CD4-positive, alpha-beta memory T cell (primary cell): ENCODE measurements at regions of chr11 and their contacts with region 1.

Region 1: DNA sequence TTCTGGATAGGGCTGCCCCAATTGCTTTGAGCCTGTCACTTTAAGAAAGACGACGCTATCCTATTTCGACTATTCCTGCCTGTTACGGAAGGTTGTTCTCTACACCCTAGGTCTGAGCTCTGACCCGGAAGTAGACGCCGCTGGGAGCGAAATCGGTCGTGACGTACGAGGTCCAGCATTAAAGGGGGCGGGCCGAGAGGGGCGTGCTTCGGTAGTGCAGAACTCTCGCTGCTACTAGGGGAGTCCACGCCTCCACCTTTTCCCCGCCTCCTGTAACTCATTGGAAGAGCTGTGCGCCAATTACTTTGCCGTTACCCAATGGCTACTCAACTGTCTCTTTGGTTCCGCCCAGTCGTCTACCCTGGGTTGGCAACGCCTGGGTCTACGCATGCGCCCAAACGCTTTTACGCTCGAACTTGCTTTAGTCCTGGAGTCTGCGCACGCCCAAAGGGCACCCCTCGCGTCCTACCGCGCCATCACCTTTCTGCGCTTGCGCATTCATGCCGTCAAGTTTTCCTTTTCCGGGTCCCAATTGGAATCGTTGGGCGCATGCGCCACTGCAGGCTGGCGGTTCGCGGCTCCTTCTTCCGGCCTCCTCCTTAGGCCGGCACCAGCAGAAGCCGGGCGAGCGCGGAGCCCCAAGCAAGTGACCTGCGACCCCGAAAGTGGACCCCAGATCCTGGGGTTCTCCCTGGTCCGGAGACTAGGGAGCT is at the start of gene PCNX3:
- DNase-seq: peak; percentile 100
- H3K4me3 ChIP-seq: peak within 1 kb of the TSS; percentile 74 to 96
- H3K4me3 Mint-ChIP-seq: peak within 1 kb of the TSS; percentile 95 to 99 (median 96)
- H3K27ac ChIP-seq: peak within 1 kb of the TSS; percentile 96
- H3K27ac Mint-ChIP-seq: peak within 1 kb of the TSS; percentile 90 to 100 (median 99)
- H3K4me1 ChIP-seq: peaks cover 46% of the 10 kb centered on the region
- H3K4me1 Mint-ChIP-seq: peaks cover 23 to 59% (median 46%) of the 10 kb centered on the region in 4 donors
- H3K27me3 ChIP-seq: no peaks in the 10 kb centered on the region
- H3K27me3 Mint-ChIP-seq: no peaks in the 10 kb centered on the region
- total RNA-seq, gene PCNX3: 63.3 to 66.3 TPM

Region 2: DNA sequence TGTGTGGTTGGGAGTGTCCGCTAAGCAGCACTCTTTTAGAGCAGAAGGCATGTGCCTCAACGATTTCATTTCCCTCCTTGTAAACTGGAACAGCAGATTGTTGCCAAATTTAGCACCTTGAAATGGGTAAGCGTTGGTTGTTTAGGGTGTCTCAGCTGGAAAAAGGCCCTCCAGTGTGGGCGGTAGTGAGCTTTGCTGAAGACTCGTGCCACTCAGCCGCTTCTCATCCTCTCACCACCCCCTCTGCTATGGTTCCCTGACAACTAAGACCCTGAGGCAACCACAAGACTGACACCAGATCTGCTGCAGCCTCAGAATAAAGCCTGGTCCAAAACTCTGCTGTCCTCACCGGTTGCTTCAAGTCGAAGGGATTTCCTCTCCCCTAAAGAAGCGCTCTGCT is 1418.8 kb before region 1 on chr11:
- CTCF ChIA-PET with region 1: no interaction called
- POLR2A ChIA-PET with region 1: no interaction called
- intact Hi-C with region 1: no loop called
- DNase-seq: no peak
- H3K4me3 ChIP-seq: no peak overlapping the region
- H3K4me3 Mint-ChIP-seq: no peak overlapping the region
- H3K27ac ChIP-seq: no peak overlapping the region
- H3K27ac Mint-ChIP-seq: peak overlapping the region in 2 of 7 donors; percentile 68 to 70
- H3K4me1 ChIP-seq: peaks cover 5% of the 10 kb centered on the region
- H3K4me1 Mint-ChIP-seq: peaks cover 6 to 18% (median 10%) of the 10 kb centered on the region in 4 donors
- H3K27me3 ChIP-seq: no peaks in the 10 kb centered on the region
- H3K27me3 Mint-ChIP-seq: no peaks in the 10 kb centered on the region

Region 3: GRCh38 chr11:65454696-65455456 is 160.5 kb before region 1 on chr11:
- CTCF ChIA-PET with region 1: no interaction called
- POLR2A ChIA-PET with region 1: no interaction called
- intact Hi-C with region 1: no loop called
- DNase-seq: peak; percentile 55 to 76 (median 64)
- H3K4me3 ChIP-seq: peak overlapping the region; percentile 78 to 84
- H3K4me3 Mint-ChIP-seq: peak overlapping the region; percentile 85 to 91 (median 88)
- H3K27ac ChIP-seq: peak overlapping the region; percentile 64
- H3K27ac Mint-ChIP-seq: peak overlapping the region; percentile 84 to 97 (median 89)
- H3K4me1 ChIP-seq: peaks cover 12% of the 10 kb centered on the region
- H3K4me1 Mint-ChIP-seq: peaks cover 11 to 34% (median 16%) of the 10 kb centered on the region in 4 donors
- H3K27me3 ChIP-seq: no peaks in the 10 kb centered on the region
- H3K27me3 Mint-ChIP-seq: no peaks in the 10 kb centered on the region

Region 4: DNA sequence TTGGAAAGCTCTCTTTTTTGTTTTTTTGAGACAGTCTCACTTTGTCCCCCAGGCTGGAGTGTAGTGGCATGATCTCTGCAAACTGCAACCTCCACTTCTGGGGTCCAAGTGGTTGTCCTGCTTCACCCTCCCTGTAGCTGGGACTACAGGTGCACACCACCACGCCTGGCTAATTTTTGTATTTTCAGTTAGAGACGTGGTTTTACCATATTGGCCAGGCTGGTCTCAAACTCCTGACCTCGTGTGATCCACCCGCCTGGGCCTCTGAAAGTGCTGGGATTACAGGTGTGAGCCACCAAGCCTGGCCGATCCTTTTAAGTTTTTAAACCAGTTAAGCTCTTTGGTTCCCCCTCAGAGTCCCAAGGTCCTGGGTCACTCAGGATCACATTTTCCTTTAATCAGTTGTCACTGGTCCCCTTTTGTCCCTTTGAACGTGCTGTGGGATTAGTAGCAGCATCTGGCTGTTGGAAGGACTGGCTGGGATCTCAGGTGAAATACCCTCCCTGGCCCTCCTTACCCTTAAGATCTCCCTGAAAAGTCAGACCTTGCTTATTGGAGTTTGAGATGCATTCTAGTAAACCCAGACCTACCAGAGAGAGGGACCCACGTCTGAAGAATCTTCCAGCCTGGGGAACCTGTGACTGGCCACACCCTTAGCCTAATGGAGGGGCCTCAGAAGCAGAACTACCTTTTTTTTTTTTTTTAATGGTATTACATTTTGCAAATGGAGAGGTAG is 108.4 kb before region 1 on chr11:
- CTCF ChIA-PET with region 1: interaction called, 3 read pairs
- POLR2A ChIA-PET with region 1: interaction called, 11 read pairs
- intact Hi-C with region 1: no loop called
- DNase-seq: peak in 3 of 5 donors; percentile 40 to 72 (median 52)
- H3K4me3 ChIP-seq: no peak overlapping the region
- H3K4me3 Mint-ChIP-seq: no peak overlapping the region
- H3K27ac ChIP-seq: peak overlapping the region; percentile 35
- H3K27ac Mint-ChIP-seq: peak overlapping the region in 6 of 7 donors; percentile 84 to 96 (median 93)
- H3K4me1 ChIP-seq: peaks cover 52% of the 10 kb centered on the region
- H3K4me1 Mint-ChIP-seq: peaks cover 35 to 64% (median 50%) of the 10 kb centered on the region in 4 donors
- H3K27me3 ChIP-seq: no peaks in the 10 kb centered on the region
- H3K27me3 Mint-ChIP-seq: no peaks in the 10 kb centered on the region

Region 5: DNA sequence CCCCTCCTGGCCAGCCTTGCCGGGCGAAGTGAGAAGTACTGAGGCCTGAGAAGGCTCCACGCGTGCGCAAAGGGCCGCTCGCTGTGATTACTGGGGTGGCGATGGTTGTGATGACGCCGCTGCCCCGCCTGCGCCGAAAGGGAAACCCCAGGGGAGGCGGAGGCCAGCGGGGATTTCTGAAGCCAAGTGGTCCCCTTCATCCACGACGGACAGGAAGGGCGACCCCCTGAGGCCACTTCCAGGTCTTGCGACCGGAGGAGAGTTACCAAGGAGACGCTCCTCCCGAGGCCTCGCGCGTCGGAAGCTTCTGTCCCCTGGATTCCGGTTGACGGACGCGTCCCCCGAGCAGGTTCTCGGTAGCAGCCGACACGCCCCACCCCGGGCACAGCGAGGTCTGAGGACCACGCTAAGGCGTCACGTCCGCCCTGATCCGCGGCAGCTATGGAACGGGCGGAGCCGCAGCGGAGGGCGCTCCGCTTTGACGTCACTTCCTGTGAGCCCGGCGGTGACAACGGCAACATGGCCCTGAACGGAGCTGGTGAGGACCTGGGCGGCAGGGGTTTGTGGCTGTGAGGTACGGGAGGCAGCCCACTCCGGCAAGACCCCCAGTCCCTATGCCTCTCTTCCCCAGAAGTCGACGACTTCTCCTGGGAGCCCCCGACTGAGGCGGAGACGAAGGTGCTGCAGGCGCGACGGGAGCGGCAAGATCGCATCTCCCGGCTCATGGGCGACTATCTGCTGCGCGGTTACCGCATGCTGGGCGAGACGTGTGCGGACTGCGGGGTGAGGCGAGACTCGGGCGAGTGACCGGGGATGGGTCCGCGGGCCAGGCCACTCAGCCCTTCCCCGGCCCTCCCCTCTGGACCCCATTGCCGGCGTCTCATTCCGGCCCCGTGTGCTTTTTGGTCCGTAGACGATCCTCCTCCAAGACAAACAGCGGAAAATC is 45.1 kb before region 1 on chr11 and contains the start of gene ZNRD2:
- CTCF ChIA-PET with region 1: interaction called, 14 read pairs
- POLR2A ChIA-PET with region 1: interaction called, 77 read pairs
- intact Hi-C with region 1: loop called (anchors 1 kb)
- DNase-seq: peak; percentile 98 to 99 (median 99)
- H3K4me3 ChIP-seq: peak within 1 kb of the TSS; percentile 71 to 94
- H3K4me3 Mint-ChIP-seq: peak within 1 kb of the TSS; percentile 97 to 100 (median 98)
- H3K27ac ChIP-seq: peak within 1 kb of the TSS; percentile 99
- H3K27ac Mint-ChIP-seq: peak within 1 kb of the TSS; percentile 99 to 100 (median 99)
- H3K4me1 ChIP-seq: peaks cover 75% of the 10 kb centered on the region
- H3K4me1 Mint-ChIP-seq: peaks cover 44 to 92% (median 65%) of the 10 kb centered on the region in 4 donors
- H3K27me3 ChIP-seq: no peaks in the 10 kb centered on the region
- H3K27me3 Mint-ChIP-seq: peaks cover 0 to 3% of the 10 kb centered on the region in 2 donors
- total RNA-seq, gene ZNRD2: 24.6 to 27.5 TPM

Region 6: DNA sequence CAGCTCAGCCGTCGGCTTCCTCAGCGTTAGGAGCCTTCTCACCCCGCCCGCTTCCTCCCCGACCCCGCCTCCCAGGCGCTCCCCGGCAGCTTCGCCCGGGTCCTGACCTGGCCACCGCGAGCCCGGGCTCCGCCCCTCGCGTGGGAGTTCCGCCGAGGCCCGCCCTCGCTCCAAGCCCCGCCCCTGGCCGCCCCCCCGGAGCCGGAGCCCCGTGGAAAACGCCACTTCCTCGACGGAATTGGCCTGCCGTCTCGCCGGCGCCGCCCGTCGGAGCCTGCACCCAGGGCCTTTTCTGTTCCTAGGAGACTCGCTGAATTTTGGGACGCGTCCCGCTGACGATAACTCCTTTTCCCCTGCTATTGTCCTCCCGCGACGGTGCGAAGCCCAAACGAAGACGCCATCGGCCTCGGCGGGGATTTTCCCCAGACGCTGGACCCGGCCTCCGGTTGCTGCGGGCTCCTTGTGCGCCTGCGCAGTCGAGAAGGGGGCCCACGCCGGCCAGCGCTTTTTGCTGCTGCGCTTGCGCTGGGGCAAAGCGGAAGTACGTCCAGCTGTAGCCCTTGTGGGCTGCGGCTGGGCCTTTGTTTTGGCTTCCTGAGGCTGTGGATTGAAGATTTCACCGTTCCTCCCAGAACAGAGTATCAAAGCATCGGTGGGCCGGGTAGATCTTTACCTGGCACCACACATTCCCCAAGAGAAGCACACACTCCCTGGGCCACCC is 37.3 kb after region 1 on chr11:
- CTCF ChIA-PET with region 1: interaction called, 5 read pairs
- POLR2A ChIA-PET with region 1: interaction called, 99 read pairs
- intact Hi-C with region 1: loop called (anchors 1 kb)
- DNase-seq: peak; percentile 95 to 99 (median 97)
- H3K4me3 ChIP-seq: peak overlapping the region; percentile 50 to 64
- H3K4me3 Mint-ChIP-seq: peak overlapping the region; percentile 88 to 95 (median 91)
- H3K27ac ChIP-seq: peak overlapping the region; percentile 91
- H3K27ac Mint-ChIP-seq: peak overlapping the region; percentile 96 to 99 (median 98)
- H3K4me1 ChIP-seq: peaks cover 35% of the 10 kb centered on the region
- H3K4me1 Mint-ChIP-seq: peaks cover 34 to 59% (median 48%) of the 10 kb centered on the region in 4 donors
- H3K27me3 ChIP-seq: no peaks in the 10 kb centered on the region
- H3K27me3 Mint-ChIP-seq: no peaks in the 10 kb centered on the region

Region 7: DNA sequence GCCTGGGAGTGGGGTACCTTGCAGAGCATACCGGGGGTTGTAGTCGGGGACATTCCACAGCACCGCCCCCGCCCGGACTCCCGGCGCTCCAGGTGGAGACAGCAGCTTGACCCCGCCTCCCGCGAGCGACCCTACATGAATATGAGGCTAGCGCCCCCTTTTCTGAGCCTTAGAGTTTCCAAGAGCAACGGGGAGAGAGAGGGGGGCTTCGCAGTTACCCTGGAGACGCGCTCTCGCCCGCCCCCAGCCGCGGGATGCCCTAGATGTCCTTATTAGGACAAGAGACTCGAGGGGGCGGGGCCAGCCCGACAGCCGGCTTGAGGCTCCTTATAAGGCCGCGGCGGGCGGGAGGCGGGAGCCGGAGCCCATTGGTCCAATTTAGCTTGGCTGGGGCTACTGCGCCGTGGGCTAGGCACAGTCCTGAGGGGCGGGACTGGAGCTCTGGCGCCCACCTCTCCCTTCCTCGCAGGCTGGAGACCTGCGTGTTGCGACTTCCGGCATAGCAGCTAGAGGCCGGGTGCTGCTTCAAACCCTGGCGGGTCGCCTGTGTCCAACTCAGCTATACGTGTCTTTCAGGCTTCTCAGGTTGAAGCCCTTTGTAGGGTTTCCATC is 243.9 kb after region 1 on chr11:
- CTCF ChIA-PET with region 1: no interaction called
- POLR2A ChIA-PET with region 1: interaction called, 60 read pairs
- intact Hi-C with region 1: loop called (anchors 1 kb)
- DNase-seq: peak; percentile 89 to 98 (median 92)
- H3K4me3 ChIP-seq: peak overlapping the region; percentile 55 to 81
- H3K4me3 Mint-ChIP-seq: peak overlapping the region; percentile 93 to 99 (median 96)
- H3K27ac ChIP-seq: peak overlapping the region; percentile 85
- H3K27ac Mint-ChIP-seq: peak overlapping the region; percentile 92 to 99 (median 97)
- H3K4me1 ChIP-seq: peaks cover 58% of the 10 kb centered on the region
- H3K4me1 Mint-ChIP-seq: peaks cover 32 to 64% (median 48%) of the 10 kb centered on the region in 4 donors
- H3K27me3 ChIP-seq: no peaks in the 10 kb centered on the region
- H3K27me3 Mint-ChIP-seq: no peaks in the 10 kb centered on the region